ENCODE measurements at regions of chr9 and their contacts with region 1.

Region 1: DNA sequence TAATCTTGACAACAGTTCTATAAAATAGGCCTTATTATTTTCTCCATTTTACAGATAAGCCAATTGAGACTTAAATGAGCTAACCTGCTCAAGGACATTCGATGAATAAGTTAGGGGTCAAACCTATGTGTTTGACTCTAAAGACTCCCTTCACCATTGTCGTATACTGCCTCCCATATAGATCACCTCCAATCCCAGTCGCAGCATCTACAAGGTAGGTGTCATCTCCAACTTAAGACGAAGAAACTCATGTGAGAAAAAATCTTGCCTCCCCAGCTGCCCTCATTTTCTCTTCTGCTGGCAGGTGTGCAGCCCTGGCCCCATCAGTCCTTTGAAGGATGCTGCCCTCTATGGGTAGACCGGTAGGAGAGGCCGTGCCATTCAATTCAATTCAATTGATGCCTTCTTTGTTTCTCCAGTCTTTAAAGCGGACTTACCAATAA is 75.2 kb upstream of the SMARCA2 start:
- DNase-seq: no peak
- H3K4me3 ChIP-seq: no peak overlapping the region
- H3K27ac ChIP-seq: no peak overlapping the region
- H3K27me3 ChIP-seq: no peaks in the 10 kb centered on the region
- CTCF ChIP-seq: peak; percentile 56

Region 2: DNA sequence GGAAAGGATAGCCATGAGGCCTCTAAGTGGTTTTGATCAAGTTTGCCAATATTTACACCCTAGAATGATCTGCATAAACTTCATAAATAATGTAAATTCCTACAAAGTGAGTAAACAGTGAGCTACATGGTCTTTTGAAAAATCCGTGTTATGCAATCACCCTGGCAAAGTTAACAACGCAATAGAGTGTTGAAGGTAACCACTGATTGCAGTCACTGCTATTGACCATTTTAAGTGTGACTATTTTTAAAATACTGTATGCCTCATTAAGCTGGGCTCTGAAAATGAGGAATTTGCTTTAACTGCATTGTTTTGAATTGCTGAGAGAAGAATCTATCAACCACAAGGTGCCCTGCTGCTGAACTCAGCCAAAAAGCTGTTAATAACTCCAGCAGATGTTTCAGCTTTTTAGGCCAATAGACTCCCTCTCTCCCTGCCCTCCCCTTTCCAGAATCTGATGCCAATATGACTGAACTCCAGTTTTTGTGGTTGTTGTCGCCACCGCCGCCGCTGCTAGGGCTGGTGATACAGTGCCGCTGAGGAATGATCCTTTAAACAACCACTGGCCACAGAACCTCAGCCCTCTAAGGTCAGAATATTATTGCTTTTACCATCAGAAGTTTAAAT is 39.9 kb after region 1 on chr9:
- CTCF ChIA-PET with region 1: interaction called, 11 read pairs
- POLR2A ChIA-PET with region 1: no interaction called
- DNase-seq: no peak
- H3K4me3 ChIP-seq: no peak overlapping the region
- H3K27ac ChIP-seq: no peak overlapping the region
- H3K27me3 ChIP-seq: no peaks in the 10 kb centered on the region
- CTCF ChIP-seq: no peak

Region 3: DNA sequence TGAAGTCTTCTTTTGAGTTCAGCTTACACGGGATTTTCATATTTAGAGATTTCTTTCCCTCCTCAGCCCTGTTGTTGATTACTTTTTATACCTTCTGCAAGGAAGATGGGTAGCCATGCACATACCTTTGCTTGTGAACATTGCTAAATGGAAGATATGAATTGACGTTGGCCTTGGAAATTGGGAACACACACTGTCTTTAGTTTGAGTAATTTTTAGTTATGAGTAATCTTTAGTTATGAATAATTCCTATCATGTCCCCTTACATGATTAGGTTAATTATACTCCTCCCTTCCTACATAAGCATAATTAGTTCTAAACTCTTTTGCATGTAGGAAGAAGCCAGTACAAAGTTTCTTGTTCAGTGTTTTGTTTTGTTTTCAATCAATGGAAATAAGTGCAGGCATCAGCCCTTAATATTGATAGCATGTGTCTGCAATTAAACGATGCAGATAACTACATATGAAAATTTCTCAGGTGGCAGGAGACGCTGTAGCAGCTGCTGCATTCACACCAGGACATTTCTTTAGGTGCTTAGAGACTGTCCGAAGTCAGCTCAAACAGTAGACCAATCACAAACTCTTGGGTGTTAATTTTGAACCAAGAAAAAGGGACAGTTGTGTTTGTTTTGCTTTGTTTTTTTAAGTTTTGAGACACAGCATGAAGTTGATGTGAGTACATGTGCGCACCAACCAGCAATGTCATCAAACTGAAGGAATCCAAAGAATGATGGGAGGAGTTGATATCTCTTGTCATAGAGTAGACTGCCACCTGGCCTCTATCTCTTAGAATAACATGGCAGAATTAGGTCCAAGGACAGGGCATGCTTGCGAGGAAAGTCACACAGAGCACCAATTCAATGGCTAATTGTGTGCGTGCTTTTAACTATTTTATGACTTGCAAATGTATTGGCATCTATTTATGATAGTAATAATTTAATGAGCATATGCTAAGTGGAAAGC is 126.6 kb after region 1 on chr9:
- CTCF ChIA-PET with region 1: interaction called, 12 read pairs
- POLR2A ChIA-PET with region 1: no interaction called
- DNase-seq: no peak
- H3K4me3 ChIP-seq: no peak overlapping the region
- H3K27ac ChIP-seq: no peak overlapping the region
- H3K27me3 ChIP-seq: no peaks in the 10 kb centered on the region
- CTCF ChIP-seq: no peak

Measured in AG04450 (cell line).